ENCODE measurements at regions of chr9 and their contacts with region 1.

Region 1: GRCh38 chr9:105385381-105385985 is 62.4 kb upstream of the FSD1L start:
- DNase-seq: peak in 2 of 4 experiments; percentile 13 to 32
- ATAC-seq: peak; percentile 80
- H3K4me3 ChIP-seq: no peak overlapping the region
- H3K27ac ChIP-seq: no peak overlapping the region
- H3K4me1 ChIP-seq: no peaks in the 10 kb centered on the region; a peak in 1 of 5 replicates
- H3K27me3 ChIP-seq: no peaks in the 10 kb centered on the region; a peak in 2 of 5 replicates
- CTCF ChIP-seq: no peak
- EP300 ChIP-seq: 0 out of 2 replicates have a peak, but pooled peaks have one; percentile 19
- POLR2A ChIP-seq: no peak
- RAD21 ChIP-seq: no peak

Region 2: GRCh38 chr9:105187778-105188177 is 197.7 kb before region 1 on chr9:
- CTCF ChIA-PET with region 1: no interaction called
- POLR2A ChIA-PET with region 1: no interaction called
- in situ Hi-C with region 1: no loop called
- intact Hi-C with region 1: loop called (anchors 10 kb)
- DNase-seq: no peak
- ATAC-seq: no peak
- H3K4me3 ChIP-seq: no peak overlapping the region
- H3K27ac ChIP-seq: no peak overlapping the region
- H3K4me1 ChIP-seq: no peaks in the 10 kb centered on the region
- H3K27me3 ChIP-seq: peaks cover 3 to 25% of the 10 kb centered on the region in 2 experiments; a peak in 3 of 5 replicates
- CTCF ChIP-seq: no peak
- EP300 ChIP-seq: no peak
- POLR2A ChIP-seq: no peak
- RAD21 ChIP-seq: no peak

Region 3: GRCh38 chr9:106945727-106946660 is 1560.5 kb after region 1 on chr9:
- CTCF ChIA-PET with region 1: no interaction called
- POLR2A ChIA-PET with region 1: no interaction called
- in situ Hi-C with region 1: no loop called
- intact Hi-C with region 1: no loop called
- DNase-seq: no peak
- ATAC-seq: no peak
- H3K4me3 ChIP-seq: no peak overlapping the region
- H3K27ac ChIP-seq: no peak overlapping the region
- H3K4me1 ChIP-seq: no peaks in the 10 kb centered on the region
- H3K27me3 ChIP-seq: no peaks in the 10 kb centered on the region
- CTCF ChIP-seq: no peak
- EP300 ChIP-seq: no peak
- POLR2A ChIP-seq: no peak
- RAD21 ChIP-seq: no peak